Activated CD4-positive, alpha-beta T cell treated with anti-CD3 and anti-CD28 coated beads for 36 hours (primary cell): ENCODE measurements at regions of chr2 and their contacts with region 1.

Region 1: DNA sequence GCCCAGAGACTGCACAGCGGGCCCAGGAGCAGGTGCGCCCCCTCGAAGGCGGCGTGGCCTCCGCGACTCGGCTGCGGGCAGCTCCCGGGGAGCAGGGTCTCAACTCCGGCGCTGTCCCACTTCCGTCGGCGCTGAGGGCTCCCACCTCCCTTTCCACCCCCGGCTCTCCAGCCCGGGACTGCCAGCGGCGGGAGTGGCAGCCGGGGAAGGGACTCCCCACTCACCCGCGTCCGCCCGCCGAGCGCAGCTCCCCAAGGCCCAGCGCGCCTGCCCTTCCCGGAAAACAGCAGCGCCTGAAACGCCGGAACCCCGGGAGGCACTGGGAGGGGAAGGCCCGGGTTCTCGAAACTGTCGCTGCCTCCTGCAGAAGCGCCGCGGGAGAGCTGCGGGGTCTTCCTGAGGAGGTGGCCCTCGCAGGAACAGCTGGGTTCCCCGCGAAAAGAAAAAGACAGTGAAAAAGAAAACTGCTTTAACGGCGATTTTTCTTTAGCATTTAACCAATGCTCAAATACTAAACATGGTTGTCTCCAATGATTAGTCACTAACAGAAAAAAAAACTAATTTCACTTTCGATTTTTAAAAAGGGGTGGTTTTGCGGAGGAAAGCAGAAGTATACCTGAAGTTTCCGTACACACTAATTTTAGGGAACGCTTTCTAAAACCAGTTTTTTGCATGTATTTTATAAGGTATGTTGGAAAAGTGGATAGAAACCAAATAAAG is at the start of gene NMI:
- DNase-seq: peak; percentile 84
- ATAC-seq: peak; percentile 64
- H3K4me3 Mint-ChIP-seq: peak within 1 kb of the TSS; percentile 76
- H3K27ac Mint-ChIP-seq: peak within 1 kb of the TSS; percentile 96
- H3K4me1 Mint-ChIP-seq: peaks cover 43% of the 10 kb centered on the region
- H3K27me3 Mint-ChIP-seq: peaks cover 3% of the 10 kb centered on the region
- total RNA-seq, gene NMI: 32.3 to 37.4 TPM

Region 2: DNA sequence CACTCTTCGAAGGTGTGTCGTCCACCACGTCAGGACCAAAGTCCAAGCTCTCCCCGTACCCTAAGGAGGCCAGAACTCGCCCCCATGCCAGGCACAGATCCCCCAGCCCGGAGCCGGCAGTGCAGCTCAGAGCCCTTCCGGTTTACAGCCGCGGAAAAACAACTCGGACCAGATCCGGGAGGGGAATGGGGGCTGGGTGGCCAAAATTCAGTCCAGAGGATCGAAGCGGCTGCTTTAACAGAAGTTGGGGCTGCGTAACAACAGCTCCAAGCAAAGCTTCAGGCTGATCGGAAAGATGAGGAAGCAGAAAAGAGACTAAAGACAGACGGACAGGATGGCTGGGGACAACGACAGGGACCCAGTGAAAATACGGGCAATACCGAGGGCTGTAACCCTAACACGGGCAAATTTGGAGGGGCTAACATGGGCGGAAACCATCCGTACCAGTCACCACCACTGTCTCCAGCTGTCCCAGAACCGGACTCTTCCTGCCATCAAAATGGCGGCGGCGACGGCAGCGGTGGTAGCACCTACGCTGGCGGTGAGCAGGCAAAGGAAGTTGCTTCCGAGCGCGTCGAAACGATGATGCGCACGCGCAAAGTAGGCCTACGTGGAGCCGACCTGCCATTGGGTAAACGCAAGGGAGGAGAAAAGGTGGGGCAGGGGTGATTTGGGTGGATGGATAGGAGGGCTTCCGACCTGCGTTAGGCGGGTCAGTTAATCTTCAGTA is 1702.1 kb before region 1 on chr2 and contains the start of gene MMADHC:
- CTCF ChIA-PET with region 1: no interaction called
- POLR2A ChIA-PET with region 1: no interaction called
- intact Hi-C with region 1: loop called in 1 of 2 experiments (anchors 2 kb)
- DNase-seq: peak; percentile 96
- ATAC-seq: peak; percentile 99
- H3K4me3 Mint-ChIP-seq: peak within 1 kb of the TSS; percentile 92
- H3K27ac Mint-ChIP-seq: peak within 1 kb of the TSS; percentile 99
- H3K4me1 Mint-ChIP-seq: peaks cover 41% of the 10 kb centered on the region
- H3K27me3 Mint-ChIP-seq: peaks cover 12% of the 10 kb centered on the region
- total RNA-seq, gene MMADHC: 94.7 to 136 TPM

Region 3: DNA sequence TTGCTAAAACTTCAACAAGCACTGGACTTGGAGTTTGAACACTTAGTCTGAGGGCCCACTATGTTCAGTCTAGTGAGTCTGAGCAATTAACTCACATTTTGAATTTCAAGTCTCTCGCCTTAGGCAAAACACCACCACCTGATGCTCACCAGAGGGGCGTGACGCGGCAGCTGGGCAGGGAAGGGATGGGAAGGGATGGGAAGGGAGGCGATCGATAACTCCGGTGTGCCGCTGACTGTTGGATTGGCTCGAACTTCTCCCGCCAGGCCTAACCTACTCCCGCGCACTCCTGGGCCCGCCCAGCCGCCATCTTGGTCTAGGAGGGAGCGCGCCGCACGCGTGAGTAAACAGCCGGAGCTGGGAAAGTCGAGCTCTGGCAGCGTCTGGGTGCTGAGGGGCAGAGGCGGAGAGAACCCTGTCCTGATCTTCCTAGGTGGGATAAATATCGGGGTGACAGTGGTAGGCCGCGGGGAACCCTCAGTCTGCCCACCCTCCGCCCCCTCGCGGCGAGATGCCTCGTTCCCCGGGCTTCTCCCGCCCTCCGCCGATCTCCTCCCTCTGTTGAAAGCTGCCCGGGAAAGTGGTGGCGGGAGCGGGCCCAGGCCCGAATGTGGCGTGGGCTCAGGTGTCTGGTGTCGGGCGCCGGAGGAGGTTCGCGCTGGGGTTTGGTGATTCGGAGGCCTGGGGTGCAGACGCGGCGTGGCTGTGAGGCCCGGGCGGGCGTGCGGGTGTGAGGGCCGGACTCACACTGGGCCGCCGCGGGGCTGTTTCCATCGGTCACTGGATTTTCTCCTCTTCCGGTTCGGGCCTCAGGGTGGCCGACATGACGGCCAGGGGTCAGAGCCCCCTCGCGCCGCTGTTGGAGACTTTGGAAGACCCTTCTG is 120.3 kb after region 1 on chr2 and contains the start of gene RIF1:
- CTCF ChIA-PET with region 1: no interaction called
- POLR2A ChIA-PET with region 1: no interaction called
- intact Hi-C with region 1: loop called in 1 of 2 experiments (anchors 1 kb)
- DNase-seq: peak; percentile 91
- ATAC-seq: peak; percentile 97
- H3K4me3 Mint-ChIP-seq: peak within 1 kb of the TSS; percentile 97
- H3K27ac Mint-ChIP-seq: peak within 1 kb of the TSS; percentile 98
- H3K4me1 Mint-ChIP-seq: peaks cover 28% of the 10 kb centered on the region
- H3K27me3 Mint-ChIP-seq: no peaks in the 10 kb centered on the region
- total RNA-seq, gene RIF1: 55.7 to 67.1 TPM

Region 4: GRCh38 chr2:151481744-151482143 is 192.2 kb after region 1 on chr2:
- CTCF ChIA-PET with region 1: no interaction called
- POLR2A ChIA-PET with region 1: no interaction called
- intact Hi-C with region 1: loop called (anchors 1 to 2 kb)
- DNase-seq: peak; percentile 62
- ATAC-seq: peak; percentile 84
- H3K4me3 Mint-ChIP-seq: no peak overlapping the region
- H3K27ac Mint-ChIP-seq: peak overlapping the region; percentile 68
- H3K4me1 Mint-ChIP-seq: peaks cover 41% of the 10 kb centered on the region
- H3K27me3 Mint-ChIP-seq: no peaks in the 10 kb centered on the region

Region 5: DNA sequence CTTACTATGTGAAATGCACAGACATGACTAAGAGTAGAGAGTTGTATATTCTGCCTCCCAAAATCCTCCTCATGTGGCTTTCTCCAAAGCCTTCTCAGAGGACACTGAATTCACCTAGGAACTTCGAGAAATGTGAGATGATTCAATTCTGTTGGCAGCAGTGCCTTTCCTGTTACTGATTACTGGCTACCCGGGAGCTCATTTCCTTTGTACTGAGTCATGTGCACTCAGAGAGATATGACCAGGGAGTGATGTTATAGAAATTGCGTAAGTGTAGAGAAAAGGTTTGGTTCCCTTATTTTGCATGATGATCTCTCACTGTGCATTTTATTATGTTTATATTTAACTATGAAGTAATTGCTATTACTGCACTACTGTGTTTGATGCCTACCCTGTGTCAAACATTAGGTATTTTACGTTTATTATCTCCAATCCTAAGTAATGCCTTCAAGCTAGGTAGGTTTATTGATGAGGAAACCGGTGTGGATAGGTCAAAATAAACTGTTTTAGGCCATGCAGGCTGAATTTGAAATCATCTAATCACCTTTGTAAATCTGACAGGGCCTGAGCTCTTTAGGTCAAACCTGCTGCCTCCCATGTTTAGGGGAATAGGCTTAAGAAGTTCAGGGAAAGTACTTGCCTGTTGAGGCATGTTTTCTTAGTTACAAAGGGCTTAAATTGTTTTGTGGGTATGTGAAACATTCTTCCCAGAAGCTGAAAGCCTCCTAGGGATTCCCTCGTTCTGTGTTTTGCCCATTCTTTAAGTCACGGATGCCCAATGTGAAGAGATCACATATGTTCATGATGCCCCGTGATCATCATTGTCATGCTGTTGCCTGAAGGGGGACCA is 1132.2 kb after region 1 on chr2:
- CTCF ChIA-PET with region 1: no interaction called
- POLR2A ChIA-PET with region 1: no interaction called
- intact Hi-C with region 1: loop called in 1 of 2 experiments (anchors 5 kb)
- DNase-seq: peak; percentile 27
- ATAC-seq: peak; percentile 82
- H3K4me3 Mint-ChIP-seq: no peak overlapping the region
- H3K27ac Mint-ChIP-seq: no peak overlapping the region
- H3K4me1 Mint-ChIP-seq: peaks cover 12% of the 10 kb centered on the region
- H3K27me3 Mint-ChIP-seq: peaks cover 13% of the 10 kb centered on the region